Ascending aorta (tissue), 2 donors: ENCODE measurements at regions of chr19 and their contacts with region 1.

Region 1: DNA sequence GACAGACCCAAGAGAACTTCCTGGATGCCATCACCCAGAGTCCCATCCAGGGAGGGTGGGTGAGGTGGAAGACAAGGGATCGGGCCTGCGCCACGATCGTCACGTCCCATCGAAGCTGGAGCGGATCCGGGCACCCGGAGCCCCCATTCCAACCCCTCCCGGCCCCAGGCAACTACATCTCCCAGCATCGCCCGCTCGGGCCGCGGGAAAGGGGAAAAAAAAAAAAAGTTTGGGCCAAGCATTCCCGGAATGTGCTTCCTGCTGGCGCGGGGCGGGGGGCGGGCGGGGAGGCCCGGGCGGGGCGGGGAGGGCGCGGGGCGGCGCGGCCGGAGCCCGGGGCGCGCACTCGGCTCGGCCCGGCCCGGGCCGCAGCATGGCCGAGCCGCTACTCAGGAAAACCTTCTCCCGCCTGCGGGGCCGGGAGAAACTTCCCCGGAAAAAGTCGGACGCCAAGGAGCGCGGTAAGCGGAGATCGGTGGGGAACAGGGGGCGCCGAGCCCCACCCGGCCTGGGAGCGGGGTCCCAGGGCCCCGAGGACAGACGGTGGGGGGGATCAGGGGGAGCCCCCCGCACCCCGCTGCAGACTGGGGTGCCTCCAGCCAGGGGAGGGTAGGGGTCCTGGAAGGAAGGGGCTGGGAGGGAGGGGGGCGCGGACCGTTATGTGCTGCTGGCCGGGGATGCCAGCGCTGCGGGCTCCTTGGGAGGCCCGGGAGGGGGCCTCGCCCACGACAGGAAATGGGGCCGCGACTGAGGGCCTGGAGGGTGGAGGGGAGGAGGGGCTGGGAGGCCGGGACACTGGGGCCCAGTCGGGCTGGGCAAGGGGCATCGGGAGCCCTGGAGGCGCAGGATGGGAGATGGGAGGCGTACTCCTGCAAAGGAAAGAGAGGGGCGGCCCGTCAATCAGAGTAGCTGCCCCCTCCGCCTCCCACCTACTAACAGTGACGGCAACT is at the start of gene SYDE1:
- DNase-seq: peak in 1 of 2 donors; percentile 78
- H3K4me3 ChIP-seq: peak within 1 kb of the TSS; percentile 84 to 95
- H3K27ac ChIP-seq: peak within 1 kb of the TSS; percentile 92 to 97
- H3K4me1 ChIP-seq: peaks cover 4 to 10% of the 10 kb centered on the region in 2 donors
- H3K27me3 ChIP-seq: no peaks in the 10 kb centered on the region
- CTCF ChIP-seq: no peak
- total RNA-seq, gene SYDE1: 104 TPM

Region 2: GRCh38 chr19:15125232-15126067 is 18.1 kb after region 1 on chr19:
- intact Hi-C with region 1: loop called (anchors 1 kb)
- DNase-seq: peak; percentile 95 to 99
- H3K4me3 ChIP-seq: peak overlapping the region; percentile 60 to 84
- H3K27ac ChIP-seq: peak overlapping the region; percentile 81 to 89
- H3K4me1 ChIP-seq: peaks cover 3 to 12% of the 10 kb centered on the region in 2 donors
- H3K27me3 ChIP-seq: no peaks in the 10 kb centered on the region
- CTCF ChIP-seq: no peak